Naive thymus-derived CD4-positive, alpha-beta T cell (primary cell): ENCODE measurements at regions of chr1 and their contacts with region 1.

Region 1: GRCh38 chr1:23959041-23959460 is 577 bp upstream of the PNRC2 start:
- DNase-seq: peak; percentile 60 to 96 (median 92)
- ATAC-seq: peak; percentile 89
- H3K4me3 ChIP-seq: peak overlapping the region; percentile 72
- H3K4me3 Mint-ChIP-seq: peak overlapping the region; percentile 93 to 100 (median 99)
- H3K27ac ChIP-seq: peak overlapping the region; percentile 95
- H3K27ac Mint-ChIP-seq: peak overlapping the region; percentile 98 to 100 (median 100)
- H3K4me1 ChIP-seq: peaks cover 23 to 25% of the 10 kb centered on the region in 2 donors
- H3K4me1 Mint-ChIP-seq: peaks cover 31 to 83% (median 57%) of the 10 kb centered on the region in 7 donors
- H3K27me3 ChIP-seq: no peaks in the 10 kb centered on the region
- H3K27me3 Mint-ChIP-seq: no peaks in the 10 kb centered on the region

Region 2: GRCh38 chr1:23699280-23700179 is 259.5 kb before region 1 on chr1:
- CTCF ChIA-PET with region 1: no interaction called
- POLR2A ChIA-PET with region 1: no interaction called
- intact Hi-C with region 1: no loop called
- DNase-seq: no peak
- ATAC-seq: no peak
- H3K4me3 ChIP-seq: no peak overlapping the region
- H3K4me3 Mint-ChIP-seq: no peak overlapping the region
- H3K27ac ChIP-seq: no peak overlapping the region
- H3K27ac Mint-ChIP-seq: peak overlapping the region in 2 of 9 donors; percentile 14 to 17
- H3K4me1 ChIP-seq: peaks cover 0 to 4% of the 10 kb centered on the region in 2 donors
- H3K4me1 Mint-ChIP-seq: peaks cover 20 to 46% (median 41%) of the 10 kb centered on the region in 7 donors
- H3K27me3 ChIP-seq: no peaks in the 10 kb centered on the region
- H3K27me3 Mint-ChIP-seq: no peaks in the 10 kb centered on the region

Region 3: GRCh38 chr1:23777979-23778814 is 180.9 kb before region 1 on chr1 and contains the start of gene PITHD1:
- CTCF ChIA-PET with region 1: no interaction called
- POLR2A ChIA-PET with region 1: interaction called, 4 read pairs
- intact Hi-C with region 1: loop called in 1 of 2 experiments (anchors 2 kb)
- DNase-seq: peak; percentile 75 to 86 (median 83)
- ATAC-seq: peak; percentile 91
- H3K4me3 ChIP-seq: peak within 1 kb of the TSS; percentile 95
- H3K4me3 Mint-ChIP-seq: peak within 1 kb of the TSS; percentile 84 to 98 (median 94)
- H3K27ac ChIP-seq: peak within 1 kb of the TSS; percentile 97
- H3K27ac Mint-ChIP-seq: peak within 1 kb of the TSS; percentile 87 to 99 (median 96)
- H3K4me1 ChIP-seq: peaks cover 17 to 22% of the 10 kb centered on the region in 2 donors
- H3K4me1 Mint-ChIP-seq: peaks cover 17 to 65% (median 49%) of the 10 kb centered on the region in 7 donors
- H3K27me3 ChIP-seq: no peaks in the 10 kb centered on the region
- H3K27me3 Mint-ChIP-seq: no peaks in the 10 kb centered on the region
- total RNA-seq, gene PITHD1: 57.6 to 81.9 (median 76.0) TPM

Region 4: DNA sequence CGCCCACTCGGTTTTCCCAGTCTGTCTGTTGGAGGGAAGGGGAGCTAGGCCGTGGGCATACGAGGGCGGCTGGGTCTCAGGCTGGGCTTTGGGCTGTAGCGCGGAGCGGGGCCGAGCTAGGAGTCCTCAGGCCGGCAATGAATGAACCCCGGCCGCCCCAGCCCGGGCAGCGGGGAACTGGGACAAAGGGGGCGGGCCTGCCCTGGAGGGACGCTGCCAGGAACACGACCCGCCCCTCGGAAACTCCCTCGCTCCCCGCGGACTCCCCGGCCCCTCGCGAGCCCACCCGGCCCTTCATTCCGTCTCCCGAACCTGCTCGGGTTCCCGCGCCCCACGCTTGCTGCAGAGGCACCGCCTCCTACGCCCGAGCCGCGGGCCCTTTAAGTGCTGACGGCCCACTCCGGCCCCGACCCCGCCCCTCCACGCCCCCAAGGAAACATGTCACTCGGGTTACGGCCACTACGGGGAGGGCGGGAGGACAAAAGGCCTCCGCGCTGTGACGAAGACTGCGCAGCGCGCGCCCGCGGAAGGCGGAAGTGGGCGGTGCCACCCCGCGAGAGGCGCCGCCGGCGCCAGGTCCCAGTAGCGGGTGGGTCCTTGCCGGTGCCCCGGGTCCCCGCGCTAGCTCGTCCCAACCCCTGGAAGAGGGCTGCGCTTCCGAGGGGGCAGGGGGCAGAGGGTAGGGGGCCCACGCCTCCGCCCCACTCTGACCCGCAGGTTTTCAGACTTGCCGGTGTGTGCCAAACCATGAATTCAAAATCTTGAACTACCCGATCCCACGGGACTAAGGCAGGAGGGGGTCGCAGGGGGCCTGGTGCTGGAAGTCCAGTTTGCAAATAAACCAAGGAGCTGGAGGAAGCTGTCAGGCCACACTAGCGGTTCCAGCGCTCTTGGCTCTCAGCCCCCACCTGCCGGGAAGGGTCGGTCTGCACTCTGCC is 158.4 kb before region 1 on chr1 and contains the start of gene GALE:
- CTCF ChIA-PET with region 1: no interaction called
- POLR2A ChIA-PET with region 1: no interaction called
- intact Hi-C with region 1: loop called (anchors 1 to 2 kb)
- DNase-seq: peak; percentile 87 to 96 (median 94)
- ATAC-seq: peak; percentile 97
- H3K4me3 ChIP-seq: peak within 1 kb of the TSS; percentile 84
- H3K4me3 Mint-ChIP-seq: peak within 1 kb of the TSS; percentile 79 to 94 (median 88)
- H3K27ac ChIP-seq: peak within 1 kb of the TSS; percentile 91
- H3K27ac Mint-ChIP-seq: peak within 1 kb of the TSS; percentile 81 to 95 (median 92)
- H3K4me1 ChIP-seq: peaks cover 7 to 15% of the 10 kb centered on the region in 2 donors
- H3K4me1 Mint-ChIP-seq: peaks cover 6 to 25% (median 15%) of the 10 kb centered on the region in 7 donors
- H3K27me3 ChIP-seq: no peaks in the 10 kb centered on the region
- H3K27me3 Mint-ChIP-seq: no peaks in the 10 kb centered on the region
- total RNA-seq, gene GALE: 8.1 to 21.4 (median 12.7) TPM

Region 5: GRCh38 chr1:23979878-23980724 is 21.1 kb after region 1 on chr1 and contains the start of gene SRSF10:
- CTCF ChIA-PET with region 1: interaction called, 4 read pairs
- POLR2A ChIA-PET with region 1: interaction called, 108 read pairs
- intact Hi-C with region 1: loop called (anchors 1 kb)
- DNase-seq: peak; percentile 91 to 99 (median 98)
- ATAC-seq: peak; percentile 97
- H3K4me3 ChIP-seq: peak within 1 kb of the TSS; percentile 75
- H3K4me3 Mint-ChIP-seq: peak within 1 kb of the TSS; percentile 87 to 98 (median 94)
- H3K27ac ChIP-seq: peak within 1 kb of the TSS; percentile 98
- H3K27ac Mint-ChIP-seq: peak within 1 kb of the TSS; percentile 94 to 99 (median 96)
- H3K4me1 ChIP-seq: peaks cover 31 to 43% of the 10 kb centered on the region in 2 donors
- H3K4me1 Mint-ChIP-seq: peaks cover 39 to 57% (median 53%) of the 10 kb centered on the region in 7 donors
- H3K27me3 ChIP-seq: no peaks in the 10 kb centered on the region
- H3K27me3 Mint-ChIP-seq: peaks cover 0 to 4% (median 0%) of the 10 kb centered on the region in 5 donors
- total RNA-seq, gene SRSF10: 170 to 252 (median 193) TPM

Region 6: DNA sequence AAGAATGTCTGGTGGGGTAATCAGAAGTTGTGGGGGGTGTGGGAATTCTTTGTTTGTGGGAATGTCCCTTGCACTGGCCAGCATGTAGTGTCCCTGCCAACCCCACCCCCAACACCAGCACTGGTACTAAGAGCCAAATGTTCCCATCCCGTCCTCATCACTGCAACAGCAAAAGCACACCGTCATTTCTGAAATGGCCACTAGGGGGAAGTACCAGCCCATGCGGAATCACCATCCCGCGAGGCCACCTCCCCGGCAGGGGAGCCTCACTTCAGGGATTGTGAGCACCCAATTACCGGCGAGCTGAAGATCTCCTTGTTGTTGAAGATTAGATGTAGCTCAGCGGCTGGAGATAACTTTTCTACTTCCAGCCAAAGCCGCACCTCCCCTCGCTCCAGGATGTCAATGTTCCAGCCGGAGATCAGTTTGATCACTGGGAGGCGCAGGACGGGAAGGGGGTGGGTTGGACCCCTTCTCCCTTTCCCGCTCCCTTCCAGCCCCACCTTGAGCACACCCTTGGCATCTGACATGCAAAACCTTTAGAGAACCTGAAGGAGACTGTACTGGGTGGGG is 111.9 kb after region 1 on chr1:
- CTCF ChIA-PET with region 1: no interaction called
- POLR2A ChIA-PET with region 1: no interaction called
- intact Hi-C with region 1: loop called in 1 of 2 experiments (anchors 1 kb)
- DNase-seq: peak; percentile 36 to 73 (median 66)
- ATAC-seq: peak; percentile 92
- H3K4me3 ChIP-seq: no peak overlapping the region
- H3K4me3 Mint-ChIP-seq: peak overlapping the region in 1 of 10 donors; percentile 6
- H3K27ac ChIP-seq: no peak overlapping the region
- H3K27ac Mint-ChIP-seq: no peak overlapping the region
- H3K4me1 ChIP-seq: no peaks in the 10 kb centered on the region
- H3K4me1 Mint-ChIP-seq: peaks cover 0 to 5% (median 4%) of the 10 kb centered on the region in 7 donors
- H3K27me3 ChIP-seq: no peaks in the 10 kb centered on the region
- H3K27me3 Mint-ChIP-seq: peaks cover 0 to 10% (median 4%) of the 10 kb centered on the region in 5 donors

Region 7: DNA sequence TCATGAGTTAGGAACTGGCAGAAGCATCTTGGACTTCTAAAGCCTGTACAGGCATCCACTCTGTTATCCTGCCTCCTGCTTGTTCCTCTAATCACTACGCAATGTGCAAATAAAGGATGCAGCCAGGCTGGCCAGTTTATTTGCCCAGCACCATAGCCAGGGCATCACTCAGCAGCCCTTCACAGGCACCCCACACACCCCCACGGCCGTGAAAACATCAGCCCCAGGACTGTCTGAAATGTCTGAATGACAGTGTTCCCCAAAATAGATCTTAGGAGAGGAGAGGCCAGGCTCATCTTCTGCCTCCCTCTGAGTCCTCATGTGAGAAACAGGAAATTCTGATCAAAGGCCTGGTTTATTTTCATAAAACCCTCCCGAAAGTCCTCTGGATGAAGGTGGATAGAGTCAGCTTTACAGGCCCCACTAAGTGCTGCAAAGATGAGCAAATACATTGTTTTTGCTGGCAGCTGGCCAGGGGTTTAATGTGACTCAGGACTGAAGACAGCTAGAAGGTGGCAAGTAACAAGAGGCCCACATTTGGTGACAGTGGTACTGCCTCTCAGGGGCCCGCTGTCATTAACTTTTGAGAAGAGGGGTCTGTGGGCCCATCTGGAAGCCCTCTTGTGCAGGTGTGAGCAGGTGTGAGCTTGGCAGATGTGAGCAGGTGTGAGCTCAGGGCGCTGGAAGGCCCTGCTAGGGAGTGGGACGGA is 393.0 kb after region 1 on chr1:
- CTCF ChIA-PET with region 1: no interaction called
- POLR2A ChIA-PET with region 1: no interaction called
- intact Hi-C with region 1: no loop called
- DNase-seq: peak in 1 of 9 donors; percentile 54
- ATAC-seq: no peak
- H3K4me3 ChIP-seq: no peak overlapping the region
- H3K4me3 Mint-ChIP-seq: peak overlapping the region in 1 of 10 donors; percentile 35
- H3K27ac ChIP-seq: no peak overlapping the region
- H3K27ac Mint-ChIP-seq: peak overlapping the region in 4 of 9 donors; percentile 21 to 51 (median 42)
- H3K4me1 ChIP-seq: no peaks in the 10 kb centered on the region
- H3K4me1 Mint-ChIP-seq: peaks cover 9 to 38% (median 27%) of the 10 kb centered on the region in 7 donors
- H3K27me3 ChIP-seq: no peaks in the 10 kb centered on the region
- H3K27me3 Mint-ChIP-seq: peaks cover 0 to 4% (median 0%) of the 10 kb centered on the region in 5 donors

Region 8: DNA sequence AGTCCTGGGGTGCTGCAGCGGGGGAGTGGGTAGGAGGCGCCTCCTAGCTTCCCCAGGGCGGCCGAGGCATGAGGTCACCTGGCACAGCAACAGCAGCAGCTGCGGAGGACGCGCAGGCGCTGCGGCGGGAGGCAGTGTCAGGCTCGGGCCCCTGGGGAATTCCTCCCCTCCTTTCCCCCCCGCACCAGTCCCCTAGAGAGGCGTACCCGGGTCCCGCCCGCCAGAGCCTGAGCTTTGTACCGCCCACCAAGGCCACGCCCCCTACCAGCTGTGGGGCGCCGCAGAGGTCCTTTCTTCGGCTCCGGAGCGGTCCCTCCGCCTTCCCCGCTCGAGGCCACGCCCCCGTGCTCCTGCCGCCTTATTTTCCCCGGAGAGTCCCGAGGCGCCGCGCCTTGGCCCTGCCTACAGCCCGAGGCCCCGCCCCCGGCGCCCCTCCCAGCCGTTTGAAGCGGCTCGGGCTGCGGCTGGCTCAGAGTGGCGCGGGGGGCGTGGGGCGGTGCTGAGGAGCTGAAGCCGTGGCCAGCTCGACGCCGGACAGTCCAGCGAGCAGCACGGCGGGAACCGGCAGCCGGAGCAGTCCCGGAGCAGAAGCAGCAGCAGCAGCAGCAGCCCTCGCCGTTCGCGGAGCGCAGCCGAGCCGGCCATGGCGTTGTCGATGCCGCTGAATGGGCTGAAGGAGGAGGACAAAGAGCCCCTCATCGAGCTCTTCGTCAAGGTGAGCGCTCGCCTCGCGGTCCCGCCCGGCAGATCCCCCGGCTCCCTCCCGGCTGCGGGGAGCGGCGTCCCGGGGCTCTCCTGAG is 786.1 kb after region 1 on chr1 and contains the start of gene CLIC4:
- CTCF ChIA-PET with region 1: no interaction called
- POLR2A ChIA-PET with region 1: no interaction called
- intact Hi-C with region 1: loop called in 1 of 2 experiments (anchors 10 kb)
- DNase-seq: peak; percentile 97 to 100 (median 98)
- ATAC-seq: peak; percentile 97
- H3K4me3 ChIP-seq: peak within 1 kb of the TSS; percentile 55
- H3K4me3 Mint-ChIP-seq: peak within 1 kb of the TSS; percentile 84 to 94 (median 89)
- H3K27ac ChIP-seq: peak within 1 kb of the TSS; percentile 57
- H3K27ac Mint-ChIP-seq: peak within 1 kb of the TSS; percentile 18 to 89 (median 79)
- H3K4me1 ChIP-seq: peaks cover 0 to 4% of the 10 kb centered on the region in 2 donors
- H3K4me1 Mint-ChIP-seq: peaks cover 7 to 57% (median 15%) of the 10 kb centered on the region in 7 donors
- H3K27me3 ChIP-seq: no peaks in the 10 kb centered on the region
- H3K27me3 Mint-ChIP-seq: peaks cover 0 to 10% (median 0%) of the 10 kb centered on the region in 5 donors
- total RNA-seq, gene CLIC4: 1.4 to 16.8 (median 5.1) TPM

Region 9: GRCh38 chr1:25239681-25240541 is 1280.9 kb after region 1 on chr1:
- CTCF ChIA-PET with region 1: no interaction called
- POLR2A ChIA-PET with region 1: no interaction called
- intact Hi-C with region 1: loop called in 1 of 2 experiments (anchors 10 kb)
- DNase-seq: peak; percentile 72 to 91 (median 79)
- ATAC-seq: peak; percentile 92
- H3K4me3 ChIP-seq: peak overlapping the region; percentile 28
- H3K4me3 Mint-ChIP-seq: peak overlapping the region; percentile 87 to 93 (median 91)
- H3K27ac ChIP-seq: peak overlapping the region; percentile 80
- H3K27ac Mint-ChIP-seq: peak overlapping the region; percentile 89 to 98 (median 97)
- H3K4me1 ChIP-seq: peaks cover 33 to 37% of the 10 kb centered on the region in 2 donors
- H3K4me1 Mint-ChIP-seq: peaks cover 23 to 74% (median 63%) of the 10 kb centered on the region in 7 donors
- H3K27me3 ChIP-seq: no peaks in the 10 kb centered on the region
- H3K27me3 Mint-ChIP-seq: no peaks in the 10 kb centered on the region